Natural killer cell (primary cell): ENCODE measurements at regions of chr11 and their contacts with region 1.

Region 1: GRCh38 chr11:24312464-24313238 is 184.2 kb upstream of the LUZP2 start:
- DNase-seq: peak in 1 of 2 donors; percentile 11
- ATAC-seq: peak; percentile 91 to 94 (median 92)
- H3K4me3 ChIP-seq: no peak overlapping the region
- H3K4me3 Mint-ChIP-seq: peak overlapping the region; percentile 86
- H3K27ac ChIP-seq: peak overlapping the region; percentile 77
- H3K27ac Mint-ChIP-seq: peak overlapping the region; percentile 85 to 88
- H3K4me1 ChIP-seq: no peaks in the 10 kb centered on the region
- H3K4me1 Mint-ChIP-seq: peaks cover 25 to 31% of the 10 kb centered on the region in 2 donors
- H3K27me3 ChIP-seq: no peaks in the 10 kb centered on the region
- H3K27me3 Mint-ChIP-seq: no peaks in the 10 kb centered on the region
- CTCF ChIP-seq: no peak

Region 2: GRCh38 chr11:23564370-23564769 is 748.3 kb before region 1 on chr11:
- intact Hi-C with region 1: loop called (anchors 5 kb)
- DNase-seq: peak in 1 of 2 donors; percentile 3
- ATAC-seq: peak; percentile 68 to 77 (median 76)
- H3K4me3 ChIP-seq: no peak overlapping the region
- H3K4me3 Mint-ChIP-seq: peak overlapping the region; percentile 29
- H3K27ac ChIP-seq: no peak overlapping the region
- H3K27ac Mint-ChIP-seq: peak overlapping the region; percentile 8 to 64
- H3K4me1 ChIP-seq: peaks cover 5% of the 10 kb centered on the region
- H3K4me1 Mint-ChIP-seq: peaks cover 18 to 38% of the 10 kb centered on the region in 2 donors
- H3K27me3 ChIP-seq: no peaks in the 10 kb centered on the region
- H3K27me3 Mint-ChIP-seq: peaks cover 4% of the 10 kb centered on the region in 2 donors
- CTCF ChIP-seq: no peak

Region 3: GRCh38 chr11:24575392-24575791 is 262.7 kb after region 1 on chr11:
- intact Hi-C with region 1: no loop called
- DNase-seq: no peak
- ATAC-seq: no peak
- H3K4me3 ChIP-seq: no peak overlapping the region
- H3K4me3 Mint-ChIP-seq: no peak overlapping the region
- H3K27ac ChIP-seq: no peak overlapping the region
- H3K27ac Mint-ChIP-seq: no peak overlapping the region
- H3K4me1 ChIP-seq: no peaks in the 10 kb centered on the region
- H3K4me1 Mint-ChIP-seq: no peaks in the 10 kb centered on the region
- H3K27me3 ChIP-seq: no peaks in the 10 kb centered on the region
- H3K27me3 Mint-ChIP-seq: peaks cover 0 to 2% of the 10 kb centered on the region in 2 donors
- CTCF ChIP-seq: no peak